OCI-LY7 (cell line): ENCODE measurements at regions of chr12 and their contacts with region 1.

Region 1: DNA sequence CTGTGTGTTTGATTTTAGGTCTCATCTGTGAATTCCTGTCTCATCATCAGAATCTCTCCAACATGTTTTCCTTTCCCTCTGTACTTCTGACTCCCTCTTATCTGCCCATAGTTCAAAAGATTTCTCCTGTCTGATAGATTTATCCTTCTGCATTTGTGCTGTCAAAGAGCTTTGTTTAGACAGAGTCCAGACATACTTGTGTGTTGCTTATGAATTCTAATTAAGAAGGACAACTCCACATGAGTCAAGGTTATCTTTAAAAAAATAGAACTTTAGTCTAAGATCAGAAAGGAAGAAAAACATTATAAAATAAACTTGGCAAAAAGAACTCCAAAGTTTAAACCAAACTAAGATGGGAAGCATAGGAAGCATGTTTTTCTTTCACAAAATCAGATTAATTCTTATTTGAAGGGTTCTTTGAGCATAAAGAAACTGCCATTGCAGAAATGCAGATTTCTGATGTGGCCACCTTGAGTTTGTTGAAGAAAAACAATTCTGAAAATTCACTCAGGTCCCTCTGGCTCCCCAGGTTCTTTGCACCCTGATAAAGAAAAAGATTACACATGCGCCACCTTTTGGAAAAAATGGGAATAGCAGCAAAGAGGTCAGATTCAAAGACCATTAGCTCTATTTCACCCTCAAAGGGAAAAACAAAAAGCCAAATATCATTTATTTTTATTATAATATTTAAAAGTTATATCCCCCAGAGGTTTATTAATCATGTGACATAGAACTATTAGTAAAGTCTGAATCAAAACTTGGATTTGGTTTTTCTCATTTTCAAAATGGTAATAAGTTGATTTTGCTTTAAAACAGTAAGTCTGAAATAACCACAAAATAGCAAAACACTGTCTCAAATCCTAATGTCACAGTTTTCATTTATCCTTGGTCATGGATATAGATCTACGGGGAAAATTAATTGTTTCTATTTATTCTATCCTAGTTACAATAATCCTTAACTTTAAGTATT is 143.7 kb upstream of the DCN start:
- DNase-seq: peak; percentile 42
- H3K4me3 ChIP-seq: no peak overlapping the region
- H3K27ac ChIP-seq: no peak overlapping the region
- H3K4me1 ChIP-seq: no peaks in the 10 kb centered on the region
- CTCF ChIP-seq: peak; percentile 93

Region 2: GRCh38 chr12:91178139-91178561 is 148.2 kb before region 1 on chr12:
- CTCF ChIA-PET with region 1: no interaction called
- POLR2A ChIA-PET with region 1: no interaction called
- intact Hi-C with region 1: loop called (anchors 10 kb)
- DNase-seq: no peak
- H3K4me3 ChIP-seq: no peak overlapping the region
- H3K27ac ChIP-seq: no peak overlapping the region
- H3K4me1 ChIP-seq: no peaks in the 10 kb centered on the region
- CTCF ChIP-seq: peak; percentile 58

Region 3: GRCh38 chr12:91397866-91398532 is 71.7 kb after region 1 on chr12:
- CTCF ChIA-PET with region 1: no interaction called
- POLR2A ChIA-PET with region 1: no interaction called
- intact Hi-C with region 1: no loop called
- DNase-seq: no peak
- H3K4me3 ChIP-seq: no peak overlapping the region
- H3K27ac ChIP-seq: no peak overlapping the region
- H3K4me1 ChIP-seq: no peaks in the 10 kb centered on the region
- CTCF ChIP-seq: no peak